Activated B cell treated with CpG ODN at 0.5 μM for 24 hours (primary cell): ENCODE measurements at regions of chr4 and their contacts with region 1.

Region 1: GRCh38 chr4:162770761-162771490 is 395.8 kb downstream of the NAF1 start:
- DNase-seq: no peak
- ATAC-seq: no peak
- H3K4me3 Mint-ChIP-seq: no peak overlapping the region
- H3K27ac Mint-ChIP-seq: no peak overlapping the region
- H3K4me1 Mint-ChIP-seq: no peaks in the 10 kb centered on the region
- H3K27me3 Mint-ChIP-seq: no peaks in the 10 kb centered on the region
- CTCF ChIP-seq: no peak

Region 2: GRCh38 chr4:163042306-163042705 is 271.4 kb after region 1 on chr4:
- CTCF ChIA-PET with region 1: no interaction called
- POLR2A ChIA-PET with region 1: no interaction called
- intact Hi-C with region 1: loop called (anchors 5 kb)
- DNase-seq: no peak
- ATAC-seq: no peak
- H3K4me3 Mint-ChIP-seq: no peak overlapping the region
- H3K27ac Mint-ChIP-seq: no peak overlapping the region
- H3K4me1 Mint-ChIP-seq: no peaks in the 10 kb centered on the region
- H3K27me3 Mint-ChIP-seq: peaks cover 11% of the 10 kb centered on the region
- CTCF ChIP-seq: no peak

Region 3: GRCh38 chr4:163215896-163216295 is 445.0 kb after region 1 on chr4:
- CTCF ChIA-PET with region 1: no interaction called
- POLR2A ChIA-PET with region 1: no interaction called
- intact Hi-C with region 1: no loop called
- DNase-seq: no peak
- ATAC-seq: no peak
- H3K4me3 Mint-ChIP-seq: no peak overlapping the region
- H3K27ac Mint-ChIP-seq: no peak overlapping the region
- H3K4me1 Mint-ChIP-seq: no peaks in the 10 kb centered on the region
- H3K27me3 Mint-ChIP-seq: peaks cover 1% of the 10 kb centered on the region
- CTCF ChIP-seq: no peak